ENCODE measurements at regions of chr12 and their contacts with region 1.

Region 1: DNA sequence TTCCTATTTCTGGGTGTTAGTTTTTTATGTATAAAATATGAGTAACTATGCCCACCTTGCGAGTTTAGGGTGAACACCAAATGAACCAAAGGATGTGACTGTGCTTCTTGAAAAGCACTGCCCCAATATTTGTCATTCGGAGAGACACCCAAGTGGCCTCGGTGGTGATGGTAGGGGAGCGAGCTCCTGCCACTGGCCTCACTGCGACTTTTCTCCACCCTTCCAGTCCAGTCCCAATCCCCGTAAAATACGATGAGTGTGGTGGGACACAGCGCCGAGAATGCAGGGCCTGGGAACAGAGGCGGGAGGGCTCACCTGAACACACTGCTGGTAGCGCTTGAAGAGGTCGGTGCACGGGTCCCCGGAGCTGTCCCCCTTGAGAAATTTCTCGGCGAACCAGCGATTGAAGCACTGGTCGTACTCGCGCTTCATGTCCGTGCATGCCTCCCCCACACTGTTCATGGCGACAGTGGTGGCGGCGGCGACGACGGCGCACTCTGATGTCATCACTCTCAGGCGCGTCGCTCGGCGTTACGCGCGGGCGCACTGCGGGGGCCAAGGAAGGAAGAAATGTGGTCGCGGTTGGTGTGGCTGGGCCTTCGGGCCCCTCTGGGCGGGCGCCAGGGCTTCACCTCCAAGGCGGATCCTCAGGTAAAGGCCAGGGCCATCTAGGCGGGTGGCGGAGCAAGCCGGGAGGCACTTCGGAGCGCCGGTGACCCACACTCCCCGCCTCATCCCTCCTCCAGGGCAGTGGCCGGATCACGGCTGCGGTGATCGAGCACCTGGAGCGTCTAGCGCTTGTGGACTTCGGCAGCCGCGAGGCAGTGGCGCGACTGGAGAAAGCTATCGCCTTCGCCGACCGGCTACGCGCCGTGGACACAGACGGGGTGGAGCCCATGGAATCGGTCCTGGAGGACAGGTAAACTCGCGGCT is at the starts of genes GATC and TRIAP1:
- DNase-seq: peak in 1 of 2 donors; percentile 89
- H3K4me3 ChIP-seq: peak within 1 kb of the TSS; percentile 81 to 98
- H3K27ac ChIP-seq: peak within 1 kb of the TSS; percentile 90 to 92
- H3K4me1 ChIP-seq: peaks cover 3 to 8% of the 10 kb centered on the region in 2 donors
- H3K27me3 ChIP-seq: no peaks in the 10 kb centered on the region
- CTCF ChIP-seq: no peak
- total RNA-seq, gene GATC: 6.2 TPM
- total RNA-seq, gene TRIAP1: 12.1 TPM

Region 2: GRCh38 chr12:120469450-120470149 is 23.4 kb after region 1 on chr12 and contains the start of gene SRSF9:
- intact Hi-C with region 1: loop called (anchors 2 kb)
- DNase-seq: peak; percentile 85 to 98
- H3K4me3 ChIP-seq: peak within 1 kb of the TSS; percentile 97 to 99
- H3K27ac ChIP-seq: peak within 1 kb of the TSS; percentile 94
- H3K4me1 ChIP-seq: peaks cover 8 to 32% of the 10 kb centered on the region in 2 donors
- H3K27me3 ChIP-seq: no peaks in the 10 kb centered on the region
- CTCF ChIP-seq: peak; percentile 92 to 96 (median 93)
- total RNA-seq, gene SRSF9: 68.6 TPM

Region 3: DNA sequence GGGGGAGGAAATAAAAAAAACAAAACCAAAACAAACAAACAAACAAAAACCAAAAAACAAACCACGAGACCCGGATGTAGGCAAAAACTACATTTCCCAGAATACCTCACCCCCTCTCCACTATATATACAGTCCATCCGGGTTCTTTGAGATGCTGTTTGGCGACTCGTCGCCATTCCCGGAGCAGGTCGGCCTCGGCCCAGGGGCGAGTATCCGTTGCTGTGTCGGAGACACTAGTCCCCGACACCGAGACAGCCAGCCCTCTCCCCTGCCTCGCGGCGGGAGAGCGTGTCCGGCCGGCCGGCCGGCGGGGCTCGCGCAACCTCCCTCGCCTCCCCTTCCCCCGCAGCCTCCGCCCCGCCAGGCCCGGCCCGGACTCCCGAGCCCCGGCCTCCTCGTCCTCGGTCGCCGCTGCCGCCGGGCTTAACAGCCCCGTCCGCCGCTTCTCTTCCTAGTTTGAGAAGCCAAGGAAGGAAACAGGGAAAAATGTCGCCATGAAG is 88.1 kb after region 1 on chr12 and contains the start of gene RNF10:
- intact Hi-C with region 1: loop called (anchors 5 kb)
- DNase-seq: peak in 1 of 2 donors; percentile 82
- H3K4me3 ChIP-seq: peak within 1 kb of the TSS; percentile 88 to 96
- H3K27ac ChIP-seq: peak within 1 kb of the TSS; percentile 93 to 96
- H3K4me1 ChIP-seq: peaks cover 19 to 41% of the 10 kb centered on the region in 2 donors
- H3K27me3 ChIP-seq: no peaks in the 10 kb centered on the region
- CTCF ChIP-seq: no peak
- total RNA-seq, gene RNF10: 147 TPM